Posterior vena cava (tissue), 2 donors: ENCODE measurements at regions of chr7 and their contacts with region 1.

Region 1: DNA sequence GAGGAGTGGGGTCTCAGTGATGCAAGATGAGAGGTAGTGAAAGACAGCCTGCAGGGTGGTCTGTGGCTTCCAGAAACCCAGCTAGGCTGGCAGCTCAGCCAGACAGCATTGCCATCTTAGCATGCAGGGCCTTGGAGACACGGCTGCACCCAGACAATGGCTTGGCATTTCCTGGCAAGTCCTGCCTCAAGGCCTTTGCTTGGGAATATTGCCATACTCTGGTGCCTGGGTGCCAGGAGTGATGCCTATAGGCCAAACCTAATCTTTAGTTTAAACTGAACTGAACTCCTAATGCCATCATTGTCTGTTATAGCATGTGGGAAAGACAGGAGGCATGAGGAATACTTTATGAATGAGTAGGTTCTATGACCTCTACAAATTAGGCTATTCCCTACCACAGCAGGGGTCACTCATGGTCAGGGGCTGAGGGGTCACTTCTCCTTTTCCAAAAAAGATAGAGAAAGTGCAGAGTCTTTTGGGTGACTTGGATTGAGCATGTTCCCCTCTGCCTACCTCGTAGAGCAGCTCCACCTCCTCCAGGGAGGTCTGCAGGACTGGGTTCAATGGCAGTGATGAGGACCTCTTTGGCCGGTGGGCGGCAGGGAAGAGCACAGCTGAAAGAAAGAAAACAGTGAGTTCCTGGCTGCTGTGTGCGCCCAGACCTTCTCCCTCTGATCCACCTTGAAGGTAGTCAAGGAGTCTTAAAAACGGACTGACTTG is 8.8 kb upstream of the SLC13A4 start:
- DNase-seq: no peak

Region 2: GRCh38 chr7:136353287-136353686 is 616.5 kb after region 1 on chr7:
- intact Hi-C with region 1: loop called in 1 of 2 experiments (anchors 5 kb)
- DNase-seq: no peak